ENCODE measurements at regions of chr10 and their contacts with region 1.

Region 1: DNA sequence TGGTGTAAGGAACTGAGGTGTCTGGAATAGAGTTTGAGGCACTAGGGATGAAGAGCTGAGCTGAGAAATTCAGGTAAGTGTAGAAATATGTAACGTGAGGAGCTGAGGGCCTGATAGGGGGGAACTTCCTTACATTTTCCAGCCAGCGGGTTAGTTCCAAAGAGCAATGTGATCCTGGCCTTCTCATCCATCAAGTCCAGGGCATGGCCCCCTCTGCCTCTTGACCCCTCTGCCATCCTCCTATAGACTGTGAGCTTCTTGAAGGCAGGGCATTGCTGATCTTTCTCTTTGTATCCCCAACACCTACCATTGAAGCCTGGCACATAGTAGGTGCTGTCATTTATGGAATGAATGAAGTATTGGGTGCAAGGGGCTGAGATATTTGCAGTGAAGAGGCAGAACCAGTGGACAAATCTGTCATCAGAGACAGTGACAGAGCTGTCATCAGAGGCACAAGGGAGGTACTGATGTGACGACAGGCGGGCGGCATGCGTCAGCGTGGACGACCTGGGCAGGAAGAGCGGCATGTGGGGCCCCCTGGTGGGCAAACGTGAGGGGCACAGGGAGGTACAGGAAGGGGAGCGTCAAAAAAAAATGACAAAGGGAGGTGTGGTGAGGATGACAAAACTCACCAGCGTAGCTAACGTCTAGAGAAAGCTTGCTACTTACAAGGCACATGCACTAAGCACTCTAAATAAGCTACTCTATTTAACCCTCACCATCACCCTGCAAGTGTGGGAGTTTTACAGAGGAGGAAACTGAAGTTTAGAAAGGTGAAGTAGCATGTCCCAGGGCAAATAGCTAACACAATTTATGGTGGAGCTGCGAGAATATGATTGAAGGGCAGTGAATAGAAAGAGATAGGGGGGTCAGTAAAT is 5.2 kb upstream of the CAMK2G start:
- DNase-seq: peak; percentile 91
- ATAC-seq: peak; percentile 94

Region 2: DNA sequence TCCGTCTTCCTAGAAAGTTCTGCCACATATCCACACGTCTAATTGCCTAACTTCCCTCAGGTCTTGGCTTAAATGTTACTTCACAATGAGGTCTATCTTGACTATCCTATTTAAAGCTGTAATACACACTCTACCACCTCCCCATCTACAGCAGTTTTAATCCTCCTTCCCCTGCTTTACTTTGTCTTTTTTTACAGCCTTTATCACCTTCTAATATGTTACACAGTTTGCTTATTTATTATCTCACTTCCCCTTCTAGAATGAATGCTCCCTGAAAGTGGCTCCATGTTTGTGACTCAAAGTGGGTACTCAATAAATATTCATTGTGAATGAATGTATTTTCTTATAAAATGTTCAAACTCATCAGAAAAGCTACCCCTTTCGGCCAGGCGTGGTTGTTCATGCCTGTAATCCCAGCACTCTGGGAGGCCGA is 1240.1 kb before region 1 on chr10:
- intact Hi-C with region 1: no loop called
- DNase-seq: no peak
- ATAC-seq: no peak

Region 3: DNA sequence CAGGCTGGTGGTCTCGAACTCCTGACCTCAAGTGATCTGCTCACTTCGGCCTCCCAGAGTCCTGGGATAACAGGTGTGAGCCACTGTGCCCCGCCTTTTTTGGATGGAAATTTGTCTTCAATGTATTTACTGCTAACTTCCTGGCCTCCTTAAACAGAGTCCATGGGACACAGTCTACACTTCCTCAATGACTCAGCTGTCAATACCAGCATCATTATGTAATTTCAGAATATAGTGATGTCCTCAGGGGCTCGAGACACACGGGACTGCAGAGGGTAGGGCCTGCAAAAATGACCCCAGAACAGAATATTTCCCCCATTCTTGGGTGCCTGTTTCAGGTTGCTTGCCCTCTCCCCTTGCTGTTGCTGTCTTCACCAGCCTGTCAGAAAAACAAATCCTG is 36.3 kb before region 1 on chr10:
- intact Hi-C with region 1: loop called (anchors 5 kb)
- DNase-seq: no peak
- ATAC-seq: no peak

Region 4: DNA sequence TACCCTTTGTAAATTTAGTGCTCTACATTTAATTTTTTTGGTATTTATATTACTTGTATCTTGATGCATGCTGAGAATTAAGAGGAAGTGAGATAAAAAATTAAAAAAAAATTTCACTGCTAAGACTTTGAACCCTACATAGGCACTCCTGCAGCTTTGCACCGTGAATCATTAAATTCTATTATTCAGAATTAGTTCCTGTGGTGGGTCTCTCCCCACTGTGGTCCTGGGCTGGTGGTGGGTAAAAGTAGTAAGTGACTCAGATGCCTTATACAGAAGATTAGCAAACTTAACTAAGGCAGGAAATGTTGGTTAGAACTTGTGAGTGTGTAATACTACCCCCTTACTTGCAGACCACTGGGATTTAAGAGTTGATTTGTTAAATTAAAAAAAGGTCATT is 198.5 kb after region 1 on chr10:
- intact Hi-C with region 1: loop called (anchors 10 kb)
- DNase-seq: no peak
- ATAC-seq: no peak